Right ventricle myocardium inferior (tissue), 1 donor: ENCODE measurements at regions of chr12 and their contacts with region 1.

Region 1: GRCh38 chr12:94435511-94435927 is 24.1 kb downstream of the CEP83 start:
- DNase-seq: no peak
- ATAC-seq: peak; percentile 48

Region 2: DNA sequence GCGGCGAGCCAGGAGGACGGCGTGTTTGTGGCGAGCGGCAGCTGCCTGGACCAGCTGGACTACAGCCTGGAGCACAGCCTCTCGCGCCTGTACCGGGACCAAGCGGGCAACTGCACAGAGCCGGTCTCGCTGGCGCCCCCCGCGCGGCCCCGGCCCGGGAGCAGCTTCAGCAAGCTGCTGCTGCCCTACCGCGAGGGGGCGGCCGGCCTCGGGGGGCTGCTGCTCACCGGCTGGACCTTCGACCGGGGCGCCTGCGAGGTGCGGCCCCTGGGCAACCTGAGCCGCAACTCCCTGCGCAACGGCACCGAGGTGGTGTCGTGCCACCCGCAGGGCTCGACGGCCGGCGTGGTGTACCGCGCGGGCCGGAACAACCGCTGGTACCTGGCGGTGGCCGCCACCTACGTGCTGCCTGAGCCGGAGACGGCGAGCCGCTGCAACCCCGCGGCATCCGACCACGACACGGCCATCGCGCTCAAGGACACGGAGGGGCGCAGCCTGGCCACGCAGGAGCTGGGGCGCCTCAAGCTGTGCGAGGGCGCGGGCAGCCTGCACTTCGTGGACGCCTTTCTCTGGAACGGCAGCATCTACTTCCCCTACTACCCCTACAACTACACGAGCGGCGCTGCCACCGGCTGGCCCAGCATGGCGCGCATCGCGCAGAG is 286.3 kb before region 1 on chr12:
- intact Hi-C with region 1: loop called (anchors 5 kb)
- DNase-seq: peak; percentile 84
- ATAC-seq: peak; percentile 37

Region 3: DNA sequence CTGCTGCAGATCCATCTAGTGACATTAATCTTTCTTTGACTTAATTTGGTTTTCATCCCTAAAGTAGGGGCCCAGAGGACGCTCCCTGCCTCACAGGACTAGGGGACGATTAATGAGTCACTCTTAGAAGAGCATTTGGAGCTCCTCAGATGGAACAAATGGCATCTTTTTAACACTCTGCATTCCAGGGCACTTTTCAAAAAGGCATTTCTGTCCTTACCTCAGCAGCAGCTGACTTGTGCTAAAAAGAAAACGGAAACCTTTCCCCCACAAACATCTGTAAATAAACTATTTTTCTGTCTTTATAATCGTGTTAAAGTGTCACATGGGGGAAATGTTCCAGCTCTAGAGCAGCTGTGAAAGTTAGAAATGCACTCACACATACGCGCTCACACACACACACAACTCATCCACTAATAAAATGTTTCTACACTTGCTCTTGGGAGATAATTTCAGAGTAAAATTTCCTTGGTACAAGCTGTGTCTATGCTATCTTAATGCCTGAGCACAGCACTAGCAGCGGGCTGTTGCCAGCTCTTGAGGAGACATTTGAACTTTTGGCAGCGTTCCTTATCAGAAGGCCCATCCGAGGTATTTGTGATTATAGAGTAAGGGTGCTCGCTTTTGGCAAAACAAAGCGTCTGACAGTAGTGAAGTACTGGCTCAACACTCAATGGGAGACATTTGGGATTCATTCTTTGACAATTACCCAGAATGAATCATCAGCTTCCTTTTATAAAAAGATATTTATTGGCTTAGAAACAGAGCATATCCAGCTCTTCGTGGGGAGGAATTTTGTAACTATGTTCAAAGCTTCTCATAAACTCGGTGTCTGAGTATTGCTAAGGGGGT is 145.8 kb before region 1 on chr12:
- intact Hi-C with region 1: no loop called
- DNase-seq: peak; percentile 70
- ATAC-seq: peak; percentile 71

Region 4: DNA sequence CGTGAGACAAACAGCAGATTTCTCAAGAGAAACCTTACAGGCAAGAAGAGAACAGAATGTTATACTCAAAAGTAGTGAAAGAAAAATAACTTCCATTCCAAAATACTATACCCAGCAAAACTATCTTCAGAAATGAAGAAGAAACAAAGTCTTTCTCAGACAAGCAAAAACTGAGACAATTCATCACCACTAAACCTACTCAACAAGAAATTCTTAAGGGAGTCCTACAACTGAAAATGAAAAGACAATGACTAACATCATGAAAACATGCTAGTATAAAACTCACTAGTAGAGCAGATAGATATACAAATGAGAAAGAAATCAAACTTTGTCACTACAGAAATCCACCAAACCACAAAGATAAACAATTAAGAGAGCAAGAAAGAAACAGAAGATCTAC is 82.4 kb before region 1 on chr12:
- intact Hi-C with region 1: no loop called
- DNase-seq: no peak
- ATAC-seq: no peak

Region 5: GRCh38 chr12:94488463-94488862 is 52.9 kb after region 1 on chr12:
- intact Hi-C with region 1: no loop called
- DNase-seq: no peak
- ATAC-seq: no peak

Region 6: GRCh38 chr12:94525951-94526350 is 90.4 kb after region 1 on chr12:
- intact Hi-C with region 1: no loop called
- DNase-seq: no peak
- ATAC-seq: no peak